Dendritic cell treated with granulocyte-macrophage colony-stimulating factor and Interleukin-4, amounts not matched to agents 40 ng/mL and 50 ng/mL, for 4 days (primary cell): ENCODE measurements at regions of chr10 and their contacts with region 1.

Region 1: DNA sequence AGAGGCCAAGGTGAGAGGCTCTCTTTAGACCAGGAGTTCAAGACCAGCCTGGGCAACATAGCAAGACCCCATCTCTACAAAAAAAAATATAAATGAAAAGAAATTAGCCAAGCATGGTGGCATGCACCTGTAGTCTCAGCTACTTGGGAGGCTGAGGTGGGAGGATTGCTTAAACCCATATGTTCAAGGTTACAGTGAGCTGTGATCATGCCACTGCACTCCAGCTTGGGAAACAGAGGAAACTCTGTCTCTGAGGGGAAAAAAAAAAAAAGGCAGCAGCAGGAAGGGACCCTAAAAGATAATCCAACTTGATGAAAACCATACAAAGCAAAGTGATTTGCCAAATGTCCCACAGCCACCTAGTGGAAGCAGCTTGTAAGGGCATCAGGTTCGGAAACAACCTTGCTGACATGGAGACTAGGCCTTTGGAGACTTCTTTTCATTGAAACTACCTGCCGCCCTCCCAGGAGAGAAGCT is 15.6 kb upstream of the PBLD start:
- H3K4me3 Mint-ChIP-seq: no peak overlapping the region
- H3K27ac Mint-ChIP-seq: no peak overlapping the region
- H3K4me1 Mint-ChIP-seq: no peaks in the 10 kb centered on the region
- H3K27me3 Mint-ChIP-seq: no peaks in the 10 kb centered on the region

Region 2: DNA sequence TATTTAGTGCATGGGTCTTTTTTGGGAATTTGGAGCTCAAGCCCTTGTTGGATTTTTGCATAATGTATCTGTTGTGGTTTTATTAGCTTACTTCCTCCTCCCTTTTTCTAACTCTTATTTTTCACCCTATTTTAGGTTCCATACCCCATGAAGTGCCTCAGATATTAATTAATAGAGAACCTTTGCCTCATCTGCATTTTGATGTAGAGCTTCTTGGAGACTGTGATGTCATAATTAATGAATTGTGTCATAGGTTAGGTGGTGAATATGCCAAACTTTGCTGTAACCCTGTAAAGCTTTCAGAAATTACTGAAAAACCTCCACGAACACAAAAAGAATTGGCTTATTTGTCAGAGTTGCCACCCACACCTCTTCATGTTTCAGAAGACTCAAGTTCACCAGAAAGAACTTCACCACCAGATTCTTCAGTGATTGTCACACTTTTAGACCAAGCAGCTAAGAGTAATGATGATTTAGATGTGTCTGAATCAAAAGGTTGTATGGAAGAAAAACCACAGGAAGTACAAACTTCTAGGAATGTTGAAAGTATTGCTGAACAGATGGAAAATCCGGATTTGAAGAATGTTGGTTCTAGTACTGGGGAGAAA is 435.9 kb before region 1 on chr10:
- intact Hi-C with region 1: loop called (anchors 10 kb)
- H3K4me3 Mint-ChIP-seq: no peak overlapping the region
- H3K27ac Mint-ChIP-seq: no peak overlapping the region
- H3K4me1 Mint-ChIP-seq: peaks cover 11% of the 10 kb centered on the region
- H3K27me3 Mint-ChIP-seq: no peaks in the 10 kb centered on the region

Region 3: GRCh38 chr10:68212721-68213352 is 135.5 kb before region 1 on chr10:
- intact Hi-C with region 1: loop called (anchors 1 kb)
- H3K4me3 Mint-ChIP-seq: no peak overlapping the region
- H3K27ac Mint-ChIP-seq: no peak overlapping the region
- H3K4me1 Mint-ChIP-seq: no peaks in the 10 kb centered on the region
- H3K27me3 Mint-ChIP-seq: no peaks in the 10 kb centered on the region